HepG2 (cell line): ENCODE measurements at regions of chr20 and their contacts with region 1.

Region 1: GRCh38 chr20:63864847-63865640 is at the start of gene TPD52L2:
- DNase-seq: peak; percentile 100
- ATAC-seq: peak; percentile 86
- H3K4me3 ChIP-seq: peak within 1 kb of the TSS; percentile 78 to 96 (median 87)
- H3K27ac ChIP-seq: peak within 1 kb of the TSS; percentile 89
- H3K4me1 ChIP-seq: peaks cover 42% of the 10 kb centered on the region
- H3K27me3 ChIP-seq: no peaks in the 10 kb centered on the region; a peak in 1 of 5 replicates
- CTCF ChIP-seq: no peak; the same call in 1 of the 2 replicates
- EP300 ChIP-seq: peak; percentile 34 to 48; a peak in 1 of 4 replicates
- POLR2A ChIP-seq: peak in 1 of 2 experiments; percentile 98; a peak in 2 of 4 replicates
- RAD21 ChIP-seq: peak; percentile 75
- total RNA-seq, gene TPD52L2: 156 and 187 TPM in 2 replicates

Region 2: GRCh38 chr20:63183422-63184348 is 681.4 kb before region 1 on chr20:
- CTCF ChIA-PET with region 1: no interaction called
- POLR2A ChIA-PET with region 1: no interaction called
- in situ Hi-C with region 1: no loop called
- intact Hi-C with region 1: no loop called
- DNase-seq: peak; percentile 55
- ATAC-seq: peak; percentile 73
- H3K4me3 ChIP-seq: no peak overlapping the region
- H3K27ac ChIP-seq: no peak overlapping the region
- H3K4me1 ChIP-seq: 0 out of 2 replicates have a peak, but pooled peaks cover 5% of the 10 kb centered on the region
- H3K27me3 ChIP-seq: peaks cover 8 to 43% of the 10 kb centered on the region in 2 experiments; a peak in 4 of 5 replicates
- CTCF ChIP-seq: peak; percentile 96
- EP300 ChIP-seq: no peak
- POLR2A ChIP-seq: no peak
- RAD21 ChIP-seq: peak; percentile 93

Region 3: DNA sequence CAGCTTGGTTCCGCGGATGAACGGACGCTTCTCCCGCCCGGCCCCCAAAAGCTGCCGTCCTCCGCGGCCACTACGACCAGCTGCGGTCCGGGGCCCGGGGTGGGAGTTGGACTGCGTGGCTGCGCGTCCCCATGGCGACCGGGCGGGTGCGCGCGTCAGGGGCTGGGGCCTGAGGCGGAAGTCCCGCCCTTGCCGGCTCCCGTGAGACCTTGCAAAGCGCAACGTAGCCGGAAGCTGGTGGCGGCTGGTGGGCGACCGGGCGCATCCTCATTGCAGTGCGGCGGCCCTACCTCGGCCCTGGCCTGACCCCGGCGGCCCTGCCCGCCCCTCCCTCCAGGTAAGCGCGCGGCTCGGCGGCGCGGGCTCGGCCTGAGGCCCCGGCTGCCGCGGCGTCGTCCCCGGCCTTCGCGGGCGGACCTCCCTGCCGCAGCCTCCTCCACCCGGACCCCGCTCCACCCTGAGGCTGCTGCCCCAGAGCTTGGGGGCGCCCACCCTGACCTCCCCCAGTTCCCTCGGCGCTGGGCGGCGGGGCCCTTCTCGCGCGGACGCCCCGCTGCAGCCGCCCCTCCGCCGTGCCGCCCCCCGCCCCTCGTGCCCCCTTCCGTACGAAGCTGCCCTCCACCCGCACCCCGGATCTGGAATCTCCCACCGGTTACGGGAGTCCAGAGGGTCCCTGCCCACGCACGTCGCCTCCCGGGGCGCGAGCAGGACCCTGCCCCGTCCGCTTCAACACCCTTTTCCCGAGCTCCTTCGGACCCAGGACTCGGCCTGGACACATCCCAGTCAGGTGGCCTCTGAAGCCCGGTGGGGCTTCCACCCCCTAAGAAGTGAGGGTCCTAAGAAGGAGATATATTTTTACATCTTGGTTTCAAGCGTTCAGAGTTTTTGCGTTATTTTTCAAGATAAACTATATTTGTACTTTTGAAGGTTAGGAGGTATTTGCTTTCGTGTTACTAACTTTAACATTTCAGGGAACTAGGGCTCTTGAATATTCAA is 592.2 kb before region 1 on chr20 and contains the start of gene ARFGAP1:
- CTCF ChIA-PET with region 1: no interaction called
- POLR2A ChIA-PET with region 1: no interaction called
- in situ Hi-C with region 1: no loop called
- intact Hi-C with region 1: no loop called
- DNase-seq: peak; percentile 92
- ATAC-seq: peak; percentile 90
- H3K4me3 ChIP-seq: peak within 1 kb of the TSS; percentile 96 to 100 (median 99)
- H3K27ac ChIP-seq: peak within 1 kb of the TSS; percentile 72
- H3K4me1 ChIP-seq: peaks cover 38% of the 10 kb centered on the region
- H3K27me3 ChIP-seq: peaks cover 0 to 9% of the 10 kb centered on the region in 2 experiments; a peak in 2 of 5 replicates
- CTCF ChIP-seq: peak; percentile 14; the same call in 1 of the 2 replicates
- EP300 ChIP-seq: peak; percentile 5 to 64; a peak in 1 of 4 replicates
- POLR2A ChIP-seq: peak; percentile 82 to 96
- RAD21 ChIP-seq: peak; percentile 68
- total RNA-seq, gene ARFGAP1: 51.4 and 132 TPM in 2 replicates

Region 4: DNA sequence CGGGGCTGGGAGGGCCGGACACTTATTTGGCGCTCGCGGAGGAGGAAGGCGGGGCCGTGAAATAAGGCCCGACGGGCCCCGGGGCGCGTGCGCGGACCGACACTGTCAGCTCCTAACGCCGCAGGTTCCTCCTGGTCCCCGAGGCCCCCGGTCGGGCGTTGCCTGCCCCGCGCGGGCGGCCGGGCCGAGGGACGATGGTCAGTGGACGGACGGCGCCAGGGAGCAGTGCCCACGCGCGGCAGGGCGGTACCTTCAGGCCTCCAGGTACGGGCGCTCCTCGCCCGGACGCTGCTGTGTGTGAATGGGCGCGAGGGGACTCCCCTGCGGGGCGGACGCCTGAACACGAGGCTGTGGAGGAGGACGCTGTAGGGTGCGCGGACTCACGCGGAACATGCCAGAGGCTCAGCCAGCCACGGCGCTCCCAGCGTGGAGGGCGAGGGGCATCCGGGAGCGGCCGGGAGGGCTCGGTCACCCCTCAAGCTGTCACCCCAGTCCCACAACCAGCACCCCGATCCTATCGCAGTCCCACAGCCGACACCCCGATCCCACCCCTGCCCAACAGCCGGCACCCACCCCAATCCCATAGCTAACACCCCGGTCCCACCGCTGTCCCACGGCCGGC is 237.8 kb before region 1 on chr20:
- CTCF ChIA-PET with region 1: no interaction called
- POLR2A ChIA-PET with region 1: interaction called, 17 read pairs
- in situ Hi-C with region 1: no loop called
- intact Hi-C with region 1: no loop called
- DNase-seq: peak; percentile 93
- ATAC-seq: peak; percentile 62
- H3K4me3 ChIP-seq: peak overlapping the region; percentile 77 to 100 (median 98)
- H3K27ac ChIP-seq: peak overlapping the region; percentile 75
- H3K4me1 ChIP-seq: peaks cover 51% of the 10 kb centered on the region
- H3K27me3 ChIP-seq: no peaks in the 10 kb centered on the region; a peak in 1 of 5 replicates
- CTCF ChIP-seq: no peak; the same call in none of the 2 replicates
- EP300 ChIP-seq: peak in 1 of 2 experiments; percentile 51; a peak in 1 of 4 replicates
- POLR2A ChIP-seq: peak; percentile 77 to 93
- RAD21 ChIP-seq: peak; percentile 70

Region 5: GRCh38 chr20:63707549-63708300 is 157.3 kb before region 1 on chr20 and contains the starts of genes ARFRP1 and ZGPAT:
- CTCF ChIA-PET with region 1: interaction called, 15 read pairs
- POLR2A ChIA-PET with region 1: interaction called, 37 read pairs
- in situ Hi-C with region 1: no loop called
- intact Hi-C with region 1: loop called (anchors 2 kb)
- DNase-seq: peak; percentile 84
- ATAC-seq: peak; percentile 89
- H3K4me3 ChIP-seq: peak within 1 kb of the TSS; percentile 79 to 99 (median 99)
- H3K27ac ChIP-seq: peak within 1 kb of the TSS; percentile 81
- H3K4me1 ChIP-seq: peaks cover 36% of the 10 kb centered on the region
- H3K27me3 ChIP-seq: no peaks in the 10 kb centered on the region; a peak in 1 of 5 replicates
- CTCF ChIP-seq: no peak; the same call in 1 of the 2 replicates
- EP300 ChIP-seq: peak; percentile 40 to 42; a peak in 2 of 4 replicates
- POLR2A ChIP-seq: peak in 1 of 2 experiments; percentile 28; a peak in 1 of 4 replicates
- RAD21 ChIP-seq: peak; percentile 78
- total RNA-seq, gene ARFRP1: 33.7 and 51.1 TPM in 2 replicates
- total RNA-seq, gene ZGPAT: 40.2 and 41.9 TPM in 2 replicates

Region 6: GRCh38 chr20:63819224-63819921 is 45.7 kb before region 1 on chr20:
- CTCF ChIA-PET with region 1: interaction called, 9 read pairs
- POLR2A ChIA-PET with region 1: interaction called, 6 read pairs
- in situ Hi-C with region 1: no loop called
- intact Hi-C with region 1: loop called (anchors 2 kb)
- DNase-seq: peak; percentile 72
- ATAC-seq: peak; percentile 78
- H3K4me3 ChIP-seq: peak overlapping the region; percentile 39 to 40 (median 40)
- H3K27ac ChIP-seq: no peak overlapping the region
- H3K4me1 ChIP-seq: peaks cover 40% of the 10 kb centered on the region
- H3K27me3 ChIP-seq: no peaks in the 10 kb centered on the region
- CTCF ChIP-seq: peak; percentile 76
- EP300 ChIP-seq: no peak
- POLR2A ChIP-seq: no peak
- RAD21 ChIP-seq: peak; percentile 52; the same call in 1 of the 2 replicates

Region 7: DNA sequence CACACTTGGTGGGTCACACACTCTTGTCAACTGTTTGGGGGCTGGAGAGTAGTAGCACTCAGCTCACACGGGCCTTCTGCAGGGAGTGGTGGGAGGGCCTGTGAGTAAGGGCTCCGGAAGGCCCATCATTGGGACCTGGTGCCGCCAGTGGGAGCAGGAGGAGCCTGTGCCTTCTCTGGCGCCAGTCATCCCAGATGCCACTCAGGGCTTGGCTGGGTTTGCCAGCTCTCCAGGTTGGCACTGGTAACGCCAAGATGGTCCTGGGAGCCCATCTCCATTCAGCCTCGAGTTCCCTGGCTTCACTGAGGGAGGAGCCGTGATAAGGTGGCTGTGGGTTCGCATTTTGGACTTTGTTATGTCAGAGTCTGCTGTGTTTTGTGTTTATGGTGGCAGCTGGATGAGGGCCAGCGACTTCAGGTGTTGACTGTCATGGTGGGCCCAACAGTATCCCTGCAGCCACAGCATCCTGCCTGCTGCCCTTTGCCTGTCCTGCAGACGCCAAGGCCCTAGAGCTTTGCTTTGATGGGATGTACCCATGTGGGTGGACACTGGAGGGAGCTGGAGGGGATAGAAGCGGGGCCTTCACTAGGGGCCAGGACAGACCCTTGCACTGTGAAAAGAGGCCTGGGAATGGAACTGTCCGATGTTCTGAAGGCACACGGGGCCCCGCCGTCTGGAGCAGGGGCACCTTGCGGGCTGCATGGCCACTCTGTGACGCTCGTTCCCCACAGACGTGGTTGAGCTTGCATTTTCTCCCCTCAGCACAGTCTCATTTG is 16.6 kb after region 1 on chr20:
- CTCF ChIA-PET with region 1: no interaction called
- POLR2A ChIA-PET with region 1: interaction called, 15 read pairs
- in situ Hi-C with region 1: no loop called
- intact Hi-C with region 1: no loop called
- DNase-seq: no peak
- ATAC-seq: peak; percentile 9; the same call in 2 of the 3 replicates
- H3K4me3 ChIP-seq: no peak overlapping the region
- H3K27ac ChIP-seq: no peak overlapping the region
- H3K4me1 ChIP-seq: no peaks in the 10 kb centered on the region
- H3K27me3 ChIP-seq: no peaks in the 10 kb centered on the region
- CTCF ChIP-seq: no peak
- EP300 ChIP-seq: no peak
- POLR2A ChIP-seq: peak in 1 of 2 experiments; percentile 33; a peak in 1 of 4 replicates
- RAD21 ChIP-seq: no peak

Region 8: GRCh38 chr20:63980806-63981728 is 116.0 kb after region 1 on chr20 and contains the start of gene PRPF6:
- CTCF ChIA-PET with region 1: no interaction called
- POLR2A ChIA-PET with region 1: interaction called, 30 read pairs
- in situ Hi-C with region 1: no loop called
- intact Hi-C with region 1: no loop called
- DNase-seq: peak; percentile 97
- ATAC-seq: peak; percentile 73
- H3K4me3 ChIP-seq: peak within 1 kb of the TSS; percentile 95 to 99 (median 97)
- H3K27ac ChIP-seq: peak within 1 kb of the TSS; percentile 81
- H3K4me1 ChIP-seq: peaks cover 42% of the 10 kb centered on the region
- H3K27me3 ChIP-seq: no peaks in the 10 kb centered on the region; a peak in 1 of 5 replicates
- CTCF ChIP-seq: peak; percentile 100
- EP300 ChIP-seq: peak in 1 of 2 experiments; percentile 40; a peak in 1 of 4 replicates
- POLR2A ChIP-seq: peak in 1 of 2 experiments; percentile 95; a peak in 2 of 4 replicates
- RAD21 ChIP-seq: peak; percentile 94
- total RNA-seq, gene PRPF6: 101 and 127 TPM in 2 replicates